ENCODE measurements at regions of chr2 and their contacts with region 1.

Region 1: GRCh38 chr2:64562148-64562784 is 38.1 kb downstream of the AFTPH start:
- DNase-seq: peak; percentile 7 to 21 (median 17)
- H3K4me3 ChIP-seq: no peak overlapping the region
- H3K4me3 Mint-ChIP-seq: no peak overlapping the region
- H3K27ac ChIP-seq: peak overlapping the region in 1 of 2 donors; percentile 44
- H3K27ac Mint-ChIP-seq: no peak overlapping the region
- H3K4me1 ChIP-seq: peaks cover 9 to 23% of the 10 kb centered on the region in 2 donors
- H3K4me1 Mint-ChIP-seq: peaks cover 18% of the 10 kb centered on the region
- H3K27me3 ChIP-seq: no peaks in the 10 kb centered on the region
- H3K27me3 Mint-ChIP-seq: no peaks in the 10 kb centered on the region
- CTCF ChIP-seq: peak; percentile 72

Region 2: DNA sequence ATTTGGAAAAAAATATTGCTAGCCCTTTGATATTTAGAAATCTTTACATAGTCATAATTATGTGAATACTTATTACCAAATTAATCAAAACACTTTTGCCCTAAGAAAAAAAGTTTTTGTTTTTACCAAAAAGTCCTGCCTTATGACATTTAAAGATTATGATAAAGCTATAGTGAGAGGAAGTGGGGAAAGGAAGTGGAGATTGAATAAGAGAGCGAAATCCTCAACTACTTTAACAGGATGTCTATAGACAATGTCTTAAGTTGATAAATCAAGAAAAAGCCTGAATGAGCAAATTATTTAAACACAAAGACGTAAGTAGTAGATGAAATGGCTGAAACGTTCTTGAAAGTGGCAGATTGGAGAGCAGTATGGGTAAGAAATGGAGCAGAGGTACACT is 522.1 kb before region 1 on chr2:
- intact Hi-C with region 1: loop called in 1 of 2 experiments (anchors 10 kb)
- DNase-seq: no peak
- H3K4me3 ChIP-seq: no peak overlapping the region
- H3K4me3 Mint-ChIP-seq: no peak overlapping the region
- H3K27ac ChIP-seq: no peak overlapping the region
- H3K27ac Mint-ChIP-seq: no peak overlapping the region
- H3K4me1 ChIP-seq: peaks cover 9 to 16% of the 10 kb centered on the region in 2 donors
- H3K4me1 Mint-ChIP-seq: peaks cover 32% of the 10 kb centered on the region
- H3K27me3 ChIP-seq: no peaks in the 10 kb centered on the region
- H3K27me3 Mint-ChIP-seq: no peaks in the 10 kb centered on the region
- CTCF ChIP-seq: no peak